Panc1 (cell line): ENCODE measurements at regions of chr11 and their contacts with region 1.

Region 1: GRCh38 chr11:113377681-113378412 is 9.7 kb upstream of the ANKK1 start:
- DNase-seq: no peak
- ATAC-seq: no peak
- H3K4me3 ChIP-seq: no peak overlapping the region
- H3K27ac ChIP-seq: no peak overlapping the region
- H3K4me1 ChIP-seq: no peaks in the 10 kb centered on the region
- H3K27me3 ChIP-seq: no peaks in the 10 kb centered on the region
- CTCF ChIP-seq: no peak

Region 2: GRCh38 chr11:113577356-113578032 is 199.6 kb after region 1 on chr11:
- CTCF ChIA-PET with region 1: interaction called, 22 read pairs
- POLR2A ChIA-PET with region 1: no interaction called
- in situ Hi-C with region 1: no loop called
- intact Hi-C with region 1: no loop called
- DNase-seq: no peak
- ATAC-seq: 0 out of 2 replicates have a peak, but pooled peaks have one; percentile 10
- H3K4me3 ChIP-seq: no peak overlapping the region
- H3K27ac ChIP-seq: no peak overlapping the region
- H3K4me1 ChIP-seq: no peaks in the 10 kb centered on the region
- H3K27me3 ChIP-seq: no peaks in the 10 kb centered on the region
- CTCF ChIP-seq: no peak